ENCODE measurements at regions of chr5 and their contacts with region 1.

Region 1: GRCh38 chr5:91383027-91383955 is at the start of gene ARRDC3:
- DNase-seq: peak; percentile 98
- ATAC-seq: peak; percentile 67
- H3K4me3 Mint-ChIP-seq: peak within 1 kb of the TSS; percentile 98
- H3K27ac Mint-ChIP-seq: peak within 1 kb of the TSS; percentile 96
- H3K4me1 Mint-ChIP-seq: peaks cover 16% of the 10 kb centered on the region
- H3K27me3 Mint-ChIP-seq: no peaks in the 10 kb centered on the region
- total RNA-seq, gene ARRDC3: 21.7 to 21.9 TPM

Region 2: GRCh38 chr5:90529194-90529938 is 853.9 kb before region 1 on chr5 and contains the start of gene LYSMD3:
- CTCF ChIA-PET with region 1: no interaction called
- POLR2A ChIA-PET with region 1: no interaction called
- intact Hi-C with region 1: loop called in 1 of 2 experiments (anchors 5 kb)
- DNase-seq: peak; percentile 97
- ATAC-seq: peak; percentile 94
- H3K4me3 Mint-ChIP-seq: peak within 1 kb of the TSS; percentile 85
- H3K27ac Mint-ChIP-seq: peak within 1 kb of the TSS; percentile 95
- H3K4me1 Mint-ChIP-seq: peaks cover 27% of the 10 kb centered on the region
- H3K27me3 Mint-ChIP-seq: peaks cover 7% of the 10 kb centered on the region
- total RNA-seq, gene LYSMD3: 11.6 to 12.5 TPM

Region 3: GRCh38 chr5:91101600-91102379 is 281.5 kb before region 1 on chr5:
- CTCF ChIA-PET with region 1: interaction called, 35 read pairs
- POLR2A ChIA-PET with region 1: no interaction called
- intact Hi-C with region 1: loop called (anchors 1 kb)
- DNase-seq: peak; percentile 76
- ATAC-seq: peak; percentile 89
- H3K4me3 Mint-ChIP-seq: no peak overlapping the region
- H3K27ac Mint-ChIP-seq: no peak overlapping the region
- H3K4me1 Mint-ChIP-seq: no peaks in the 10 kb centered on the region
- H3K27me3 Mint-ChIP-seq: peaks cover 13% of the 10 kb centered on the region

Region 4: DNA sequence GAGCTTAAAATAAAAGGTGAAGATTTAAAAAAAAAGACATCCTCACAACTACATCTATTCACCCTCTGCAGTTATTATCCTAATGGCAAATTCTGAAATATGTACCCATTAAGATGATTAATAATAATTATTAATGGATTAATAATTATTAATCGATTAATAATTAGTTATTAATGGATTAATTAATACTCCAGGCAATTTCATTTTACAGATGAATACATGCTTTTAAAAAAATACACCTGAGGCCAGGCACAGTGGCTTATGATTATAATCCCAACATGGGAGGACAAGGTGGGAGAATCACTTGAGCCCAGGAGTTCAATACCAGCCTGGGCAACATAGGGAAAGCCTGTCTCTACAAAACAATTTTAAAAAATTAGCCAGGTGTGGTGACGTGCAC is 182.6 kb before region 1 on chr5:
- CTCF ChIA-PET with region 1: interaction called, 10 read pairs
- POLR2A ChIA-PET with region 1: no interaction called
- intact Hi-C with region 1: no loop called
- DNase-seq: no peak
- ATAC-seq: no peak
- H3K4me3 Mint-ChIP-seq: no peak overlapping the region
- H3K27ac Mint-ChIP-seq: no peak overlapping the region
- H3K4me1 Mint-ChIP-seq: no peaks in the 10 kb centered on the region
- H3K27me3 Mint-ChIP-seq: peaks cover 6% of the 10 kb centered on the region

Region 5: GRCh38 chr5:91235271-91235694 is 148.0 kb before region 1 on chr5:
- CTCF ChIA-PET with region 1: interaction called, 16 read pairs
- POLR2A ChIA-PET with region 1: no interaction called
- intact Hi-C with region 1: no loop called
- DNase-seq: no peak
- ATAC-seq: no peak
- H3K4me3 Mint-ChIP-seq: no peak overlapping the region
- H3K27ac Mint-ChIP-seq: no peak overlapping the region
- H3K4me1 Mint-ChIP-seq: peaks cover 3% of the 10 kb centered on the region
- H3K27me3 Mint-ChIP-seq: peaks cover 2% of the 10 kb centered on the region

Region 6: GRCh38 chr5:91311697-91312501 is 71.4 kb before region 1 on chr5:
- CTCF ChIA-PET with region 1: interaction called, 43 read pairs
- POLR2A ChIA-PET with region 1: interaction called, 5 read pairs
- intact Hi-C with region 1: loop called (anchors 1 kb)
- DNase-seq: peak; percentile 77
- ATAC-seq: peak; percentile 77
- H3K4me3 Mint-ChIP-seq: peak overlapping the region; percentile 63
- H3K27ac Mint-ChIP-seq: peak overlapping the region; percentile 82
- H3K4me1 Mint-ChIP-seq: peaks cover 49% of the 10 kb centered on the region
- H3K27me3 Mint-ChIP-seq: no peaks in the 10 kb centered on the region

Region 7: DNA sequence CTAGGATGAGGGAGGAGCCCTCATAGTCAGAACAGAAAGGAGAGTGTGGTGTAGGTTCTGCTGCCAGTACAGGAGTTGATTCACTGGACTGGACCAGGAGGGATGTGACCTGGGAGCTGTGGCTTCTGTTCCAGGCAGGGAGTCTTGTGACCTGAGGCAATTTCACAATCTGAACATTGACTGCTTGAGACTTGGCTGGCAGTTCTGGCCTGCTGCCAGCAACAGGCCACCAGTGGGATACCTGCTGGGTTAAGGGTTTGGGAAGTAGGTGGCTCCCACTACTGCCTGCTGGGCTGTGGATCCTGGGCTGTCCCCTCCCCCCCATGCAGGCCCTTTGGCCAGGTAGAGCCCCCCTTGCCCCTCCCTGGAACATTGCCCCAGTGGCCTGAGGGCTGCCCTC is 268.4 kb after region 1 on chr5:
- CTCF ChIA-PET with region 1: no interaction called
- POLR2A ChIA-PET with region 1: no interaction called
- intact Hi-C with region 1: no loop called
- DNase-seq: no peak
- ATAC-seq: no peak
- H3K4me3 Mint-ChIP-seq: no peak overlapping the region
- H3K27ac Mint-ChIP-seq: no peak overlapping the region
- H3K4me1 Mint-ChIP-seq: no peaks in the 10 kb centered on the region
- H3K27me3 Mint-ChIP-seq: peaks cover 4% of the 10 kb centered on the region

Region 8: DNA sequence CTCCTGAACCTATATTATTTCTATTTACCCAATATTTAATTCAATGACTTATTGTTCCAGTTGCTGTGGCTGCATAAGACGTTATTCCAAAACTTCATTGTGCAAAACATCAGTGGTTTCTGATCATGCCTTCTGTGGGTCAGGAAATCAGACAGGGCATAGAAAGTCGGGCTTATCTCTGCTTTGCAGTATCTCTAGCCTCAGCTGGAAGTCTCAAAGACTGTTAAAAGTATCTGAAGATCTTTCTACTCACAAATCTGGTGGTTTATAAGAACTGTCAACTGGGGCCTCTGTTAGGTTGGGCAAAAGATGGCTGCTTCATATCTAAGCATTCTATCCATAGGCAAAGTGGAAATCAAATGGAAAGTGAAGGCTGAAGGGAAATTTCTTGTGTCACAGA is 687.5 kb after region 1 on chr5:
- CTCF ChIA-PET with region 1: no interaction called
- POLR2A ChIA-PET with region 1: no interaction called
- intact Hi-C with region 1: no loop called
- DNase-seq: no peak
- ATAC-seq: no peak
- H3K4me3 Mint-ChIP-seq: no peak overlapping the region
- H3K27ac Mint-ChIP-seq: no peak overlapping the region
- H3K4me1 Mint-ChIP-seq: no peaks in the 10 kb centered on the region
- H3K27me3 Mint-ChIP-seq: no peaks in the 10 kb centered on the region

Measured in activated CD4-positive, alpha-beta T cell treated with anti-CD3 and anti-CD28 coated beads for 36 hours (primary cell).